ENCODE measurements at regions of chr12 and their contacts with region 1.

Region 1: GRCh38 chr12:21370845-21371449 is 1.8 kb upstream of the IAPP start:
- DNase-seq: no peak
- H3K4me3 ChIP-seq: no peak overlapping the region
- H3K27ac ChIP-seq: no peak overlapping the region
- H3K4me1 ChIP-seq: no peaks in the 10 kb centered on the region
- H3K27me3 ChIP-seq: peaks cover 15% of the 10 kb centered on the region
- CTCF ChIP-seq: no peak

Region 2: GRCh38 chr12:21117995-21118394 is 253.0 kb before region 1 on chr12:
- CTCF ChIA-PET with region 1: no interaction called
- POLR2A ChIA-PET with region 1: no interaction called
- intact Hi-C with region 1: no loop called
- DNase-seq: no peak
- H3K4me3 ChIP-seq: no peak overlapping the region
- H3K27ac ChIP-seq: no peak overlapping the region
- H3K4me1 ChIP-seq: no peaks in the 10 kb centered on the region
- H3K27me3 ChIP-seq: no peaks in the 10 kb centered on the region
- CTCF ChIP-seq: no peak

Region 3: GRCh38 chr12:21413369-21414277 is 42.7 kb after region 1 on chr12:
- CTCF ChIA-PET with region 1: no interaction called
- POLR2A ChIA-PET with region 1: no interaction called
- intact Hi-C with region 1: loop called (anchors 5 kb)
- DNase-seq: peak; percentile 4
- H3K4me3 ChIP-seq: no peak overlapping the region
- H3K27ac ChIP-seq: no peak overlapping the region
- H3K4me1 ChIP-seq: no peaks in the 10 kb centered on the region
- H3K27me3 ChIP-seq: peaks cover 29% of the 10 kb centered on the region
- CTCF ChIP-seq: no peak

Region 4: GRCh38 chr12:21428241-21428640 is 57.3 kb after region 1 on chr12:
- CTCF ChIA-PET with region 1: no interaction called
- POLR2A ChIA-PET with region 1: no interaction called
- intact Hi-C with region 1: no loop called
- DNase-seq: no peak
- H3K4me3 ChIP-seq: no peak overlapping the region
- H3K27ac ChIP-seq: no peak overlapping the region
- H3K4me1 ChIP-seq: no peaks in the 10 kb centered on the region
- H3K27me3 ChIP-seq: peaks cover 4% of the 10 kb centered on the region
- CTCF ChIP-seq: no peak